Panc1 (cell line): ENCODE measurements at regions of chr3 and their contacts with region 1.

Region 1: DNA sequence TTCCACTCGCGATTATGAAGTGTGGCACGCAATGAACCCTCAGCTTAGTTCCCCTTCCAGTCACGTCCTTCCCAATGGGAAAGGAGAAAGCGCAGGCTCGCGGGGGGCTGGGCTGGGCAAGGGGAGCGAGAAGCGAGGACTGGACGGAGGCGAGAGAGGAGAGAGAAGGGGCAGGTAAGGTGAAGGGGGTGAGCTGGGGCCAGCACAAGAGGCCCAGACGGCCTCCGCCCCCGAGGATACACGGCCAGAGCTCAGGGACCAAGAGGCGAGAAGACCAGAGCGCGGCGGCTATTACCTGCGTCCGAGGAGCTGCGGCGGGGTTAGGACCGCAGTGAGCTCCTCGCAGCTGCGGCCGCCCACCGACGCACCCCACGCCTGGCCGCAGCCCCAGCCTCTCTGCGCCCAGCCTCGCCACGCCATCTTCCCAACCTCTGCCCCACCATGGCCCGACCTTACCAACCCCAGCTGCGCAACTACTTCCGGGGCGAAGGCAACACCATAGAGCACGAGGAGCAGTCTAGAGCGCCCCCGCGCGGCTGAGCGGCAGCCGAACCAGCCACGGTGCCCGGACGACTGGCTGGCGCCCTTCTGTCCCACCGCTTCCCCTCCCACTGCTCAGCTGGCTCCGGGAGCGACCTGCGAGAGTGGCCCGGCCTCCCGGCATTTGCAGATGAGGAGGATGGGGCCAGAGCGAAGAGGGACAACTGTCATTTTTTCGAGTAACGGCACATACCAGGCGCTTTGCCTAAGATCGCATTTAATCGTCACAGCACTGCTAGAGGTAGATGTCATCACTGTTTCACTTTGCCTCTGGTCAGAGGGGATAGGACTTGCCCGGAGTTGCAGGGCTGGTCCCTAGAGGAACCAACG is at the start of gene PARL:
- DNase-seq: peak; percentile 78
- ATAC-seq: peak; percentile 100
- H3K4me3 ChIP-seq: peak within 1 kb of the TSS; percentile 91 to 93
- H3K27ac ChIP-seq: peak within 1 kb of the TSS; percentile 97
- H3K4me1 ChIP-seq: peaks cover 4% of the 10 kb centered on the region; the same call in 1 of the 2 replicates
- H3K27me3 ChIP-seq: no peaks in the 10 kb centered on the region
- CTCF ChIP-seq: peak; percentile 99
- total RNA-seq, gene PARL: 82.3 TPM

Region 2: DNA sequence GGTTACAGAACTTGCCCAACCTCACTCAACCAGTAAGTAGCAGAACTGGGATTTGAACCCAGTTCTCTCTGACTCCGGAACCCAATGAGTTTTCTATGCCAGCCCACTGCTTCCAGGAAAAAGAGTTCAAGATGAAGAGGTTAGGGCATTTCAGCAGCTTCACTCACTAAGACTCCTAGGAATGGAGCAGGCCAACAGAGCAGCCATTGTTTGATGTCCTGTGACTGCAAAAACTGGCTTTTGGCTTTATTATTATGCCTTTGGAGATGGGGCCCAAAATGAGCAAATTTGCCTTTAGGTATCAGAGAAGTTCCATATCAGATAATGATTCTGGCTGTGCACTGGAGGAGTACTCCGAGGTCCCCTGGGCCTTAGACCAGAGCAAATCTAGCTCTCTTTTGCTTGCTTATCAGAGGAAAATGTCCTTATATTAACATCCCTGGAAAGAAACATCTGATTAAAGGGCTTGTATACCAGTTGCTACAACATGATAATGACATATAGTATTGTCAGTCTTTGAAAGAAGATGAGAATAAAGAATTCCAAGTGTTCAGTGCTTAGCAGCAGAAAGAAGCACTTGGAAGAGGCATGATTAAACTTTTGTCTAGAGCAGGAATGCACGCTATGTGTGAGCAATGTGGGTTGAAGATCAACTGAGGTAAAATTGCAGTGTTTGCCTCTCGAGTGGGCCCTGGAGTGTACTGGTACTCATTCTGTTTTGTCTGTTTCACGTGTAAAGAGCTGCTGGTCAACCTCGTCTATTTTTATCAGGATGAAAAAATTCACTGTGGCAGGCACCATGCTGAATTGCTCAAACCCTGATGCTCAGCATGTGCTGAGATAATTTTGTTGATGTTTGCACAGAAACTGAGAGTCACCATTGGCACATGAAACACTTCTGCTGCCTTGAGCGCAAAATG is 271.0 kb before region 1 on chr3:
- CTCF ChIA-PET with region 1: no interaction called
- POLR2A ChIA-PET with region 1: no interaction called
- in situ Hi-C with region 1: no loop called
- intact Hi-C with region 1: no loop called
- DNase-seq: no peak
- ATAC-seq: no peak
- H3K4me3 ChIP-seq: no peak overlapping the region
- H3K27ac ChIP-seq: no peak overlapping the region
- H3K4me1 ChIP-seq: no peaks in the 10 kb centered on the region
- H3K27me3 ChIP-seq: peaks cover 2% of the 10 kb centered on the region; the same call in 1 of the 2 replicates
- CTCF ChIP-seq: no peak

Region 3: DNA sequence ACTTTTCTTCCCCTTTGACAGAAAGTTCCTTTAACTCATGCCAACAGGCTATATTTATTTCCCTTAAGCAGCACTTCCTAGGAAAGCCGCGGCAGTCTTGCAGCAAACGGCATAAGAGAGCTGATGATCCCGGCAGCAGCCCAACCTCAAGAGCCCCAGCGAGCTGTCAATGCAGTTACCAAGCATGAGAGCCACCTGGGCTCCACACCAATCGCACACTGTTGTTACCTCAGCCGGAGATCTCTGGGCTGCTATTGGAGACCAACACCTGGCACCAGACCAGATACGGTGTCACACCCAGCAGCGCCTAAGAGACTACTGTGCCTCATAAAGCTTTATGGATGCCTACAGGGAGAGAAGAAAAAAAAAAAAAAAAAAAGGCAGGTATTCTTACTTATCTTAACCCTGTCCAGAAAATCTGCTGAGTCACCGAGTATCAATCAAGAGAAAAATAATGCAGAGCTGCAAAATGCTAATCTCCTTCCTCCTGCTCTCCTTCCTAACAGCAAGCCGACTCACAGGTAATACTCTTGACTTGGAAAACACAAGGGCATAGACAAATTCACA is 121.4 kb after region 1 on chr3:
- CTCF ChIA-PET with region 1: interaction called, 9 read pairs
- POLR2A ChIA-PET with region 1: interaction called, 11 read pairs
- in situ Hi-C with region 1: no loop called
- intact Hi-C with region 1: no loop called
- DNase-seq: no peak
- ATAC-seq: peak; percentile 75
- H3K4me3 ChIP-seq: no peak overlapping the region
- H3K27ac ChIP-seq: peak overlapping the region; percentile 44
- H3K4me1 ChIP-seq: peaks cover 11% of the 10 kb centered on the region
- H3K27me3 ChIP-seq: no peaks in the 10 kb centered on the region
- CTCF ChIP-seq: no peak

Region 4: GRCh38 chr3:184305577-184305976 is 420.9 kb after region 1 on chr3:
- CTCF ChIA-PET with region 1: no interaction called
- POLR2A ChIA-PET with region 1: no interaction called
- in situ Hi-C with region 1: no loop called
- intact Hi-C with region 1: no loop called
- DNase-seq: no peak
- ATAC-seq: peak; percentile 71
- H3K4me3 ChIP-seq: no peak overlapping the region
- H3K27ac ChIP-seq: no peak overlapping the region
- H3K4me1 ChIP-seq: peaks cover 2% of the 10 kb centered on the region; the same call in 1 of the 2 replicates
- H3K27me3 ChIP-seq: no peaks in the 10 kb centered on the region
- CTCF ChIP-seq: peak; percentile 74

Region 5: GRCh38 chr3:185527364-185527763 is 1642.7 kb after region 1 on chr3:
- CTCF ChIA-PET with region 1: no interaction called
- POLR2A ChIA-PET with region 1: no interaction called
- in situ Hi-C with region 1: no loop called
- intact Hi-C with region 1: no loop called
- DNase-seq: no peak
- ATAC-seq: peak; percentile 68; the same call in 1 of the 2 replicates
- H3K4me3 ChIP-seq: no peak overlapping the region
- H3K27ac ChIP-seq: no peak overlapping the region
- H3K4me1 ChIP-seq: no peaks in the 10 kb centered on the region
- H3K27me3 ChIP-seq: no peaks in the 10 kb centered on the region
- CTCF ChIP-seq: no peak